AG04450 (cell line): ENCODE measurements at regions of chr10 and their contacts with region 1.

Region 1: GRCh38 chr10:101042667-101043355 is 11.8 kb downstream of the SFXN3 start:
- DNase-seq: peak; percentile 89
- H3K4me3 ChIP-seq: peak overlapping the region; percentile 58
- H3K27ac ChIP-seq: peak overlapping the region; percentile 84
- H3K27me3 ChIP-seq: no peaks in the 10 kb centered on the region
- CTCF ChIP-seq: no peak

Region 2: GRCh38 chr10:100803492-100803891 is 239.3 kb before region 1 on chr10:
- CTCF ChIA-PET with region 1: no interaction called
- POLR2A ChIA-PET with region 1: no interaction called
- DNase-seq: no peak
- H3K4me3 ChIP-seq: no peak overlapping the region
- H3K27ac ChIP-seq: no peak overlapping the region
- H3K27me3 ChIP-seq: peaks cover 49% of the 10 kb centered on the region
- CTCF ChIP-seq: no peak

Region 3: DNA sequence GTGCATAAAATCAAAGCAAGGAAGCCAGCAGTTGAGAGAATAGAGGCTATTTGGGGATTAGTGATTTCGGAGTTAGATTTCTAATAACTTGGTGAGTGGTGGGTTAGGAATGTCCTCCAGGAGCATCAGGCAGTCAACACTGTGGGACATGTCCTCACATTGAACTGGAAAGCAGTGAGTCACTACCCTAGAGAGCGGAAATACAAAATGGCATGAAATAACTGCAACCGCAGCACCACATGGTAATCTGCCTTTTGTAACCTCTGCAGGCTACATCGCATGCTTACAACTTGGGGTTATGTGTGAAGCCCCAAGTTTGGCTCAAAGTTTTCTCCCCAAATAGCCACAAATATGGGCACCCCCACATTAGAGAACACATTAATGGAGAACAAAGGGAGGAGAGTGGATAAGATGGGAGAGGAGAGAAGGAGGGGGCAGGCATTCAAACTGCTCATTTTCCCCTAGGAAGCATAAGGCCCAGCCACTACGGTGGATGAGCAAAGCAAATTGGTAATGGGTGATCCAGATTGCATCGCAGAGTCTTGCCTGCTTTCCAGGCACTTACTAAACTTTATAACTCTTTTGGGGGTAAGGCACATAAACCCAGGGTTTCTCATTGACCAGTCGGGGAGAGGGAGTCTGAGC is 152.0 kb before region 1 on chr10:
- CTCF ChIA-PET with region 1: no interaction called
- POLR2A ChIA-PET with region 1: no interaction called
- DNase-seq: peak; percentile 91
- H3K4me3 ChIP-seq: no peak overlapping the region
- H3K27ac ChIP-seq: peak overlapping the region; percentile 96
- H3K27me3 ChIP-seq: no peaks in the 10 kb centered on the region
- CTCF ChIP-seq: no peak

Region 4: GRCh38 chr10:100998991-100999741 is 43.6 kb before region 1 on chr10:
- CTCF ChIA-PET with region 1: interaction called, 22 read pairs
- POLR2A ChIA-PET with region 1: no interaction called
- DNase-seq: no peak
- H3K4me3 ChIP-seq: peak overlapping the region; percentile 90
- H3K27ac ChIP-seq: peak overlapping the region; percentile 95
- H3K27me3 ChIP-seq: no peaks in the 10 kb centered on the region
- CTCF ChIP-seq: peak; percentile 76

Region 5: GRCh38 chr10:101031128-101031795 is 11.5 kb before region 1 on chr10 and contains the starts of genes PDZD7 and SFXN3:
- CTCF ChIA-PET with region 1: interaction called, 26 read pairs
- POLR2A ChIA-PET with region 1: interaction called, 10 read pairs
- DNase-seq: peak; percentile 83
- H3K4me3 ChIP-seq: peak within 1 kb of the TSS; percentile 96
- H3K27ac ChIP-seq: peak within 1 kb of the TSS; percentile 99
- H3K27me3 ChIP-seq: no peaks in the 10 kb centered on the region
- CTCF ChIP-seq: no peak
- polyA plus RNA-seq, gene PDZD7: 0.27 and 0.60 TPM in 2 replicates
- polyA plus RNA-seq, gene SFXN3: 77.8 and 87.0 TPM in 2 replicates

Region 6: DNA sequence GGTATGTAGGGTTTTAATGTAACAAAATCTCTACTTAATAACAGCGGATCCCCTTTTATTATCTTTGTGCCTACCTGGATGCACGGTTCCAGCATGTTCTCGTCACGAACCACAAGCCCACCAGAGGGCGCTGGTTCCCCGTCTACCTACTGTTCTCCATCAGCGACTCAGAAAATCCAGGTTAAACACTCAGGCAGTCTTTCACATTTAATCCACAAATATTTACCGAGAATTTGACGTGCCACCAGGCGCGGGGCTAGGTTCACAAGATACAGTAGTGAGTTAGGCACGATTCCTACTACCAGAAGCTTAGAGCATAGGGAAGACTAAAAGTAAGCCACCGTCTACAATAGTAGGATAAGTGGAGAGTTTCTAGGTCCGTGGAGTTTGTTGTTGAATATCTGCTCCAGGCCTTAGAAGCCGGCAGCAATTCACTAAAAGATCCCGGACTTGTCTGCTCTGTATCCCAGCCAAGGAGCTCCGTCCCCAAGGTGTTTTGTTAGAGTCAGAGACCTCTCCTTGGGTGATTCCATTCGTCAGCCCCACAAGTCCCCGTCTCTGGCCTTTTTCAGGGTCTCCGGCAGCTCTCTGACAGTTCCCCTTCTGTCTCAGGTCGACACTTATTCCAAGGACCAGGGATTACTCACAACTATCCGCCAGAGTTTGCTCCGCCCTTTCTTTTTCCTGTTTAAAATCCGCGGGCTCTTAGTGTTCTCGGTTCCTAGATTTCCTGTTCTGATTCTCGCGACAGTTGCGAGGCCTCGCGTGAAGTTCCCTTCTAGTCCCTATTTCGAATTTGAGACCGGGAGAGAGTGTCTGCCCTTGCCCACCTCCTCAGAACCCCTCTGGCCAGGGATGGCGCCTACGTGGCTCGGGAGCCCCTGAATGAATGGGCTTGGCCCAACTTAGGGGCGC is 17.5 kb after region 1 on chr10:
- CTCF ChIA-PET with region 1: interaction called, 414 read pairs
- POLR2A ChIA-PET with region 1: interaction called, 30 read pairs
- DNase-seq: peak; percentile 85
- H3K4me3 ChIP-seq: peak overlapping the region; percentile 100
- H3K27ac ChIP-seq: peak overlapping the region; percentile 98
- H3K27me3 ChIP-seq: no peaks in the 10 kb centered on the region
- CTCF ChIP-seq: peak; percentile 88

Region 7: GRCh38 chr10:101195921-101196320 is 153.1 kb after region 1 on chr10:
- CTCF ChIA-PET with region 1: no interaction called
- POLR2A ChIA-PET with region 1: no interaction called
- DNase-seq: no peak
- H3K4me3 ChIP-seq: no peak overlapping the region
- H3K27ac ChIP-seq: no peak overlapping the region
- H3K27me3 ChIP-seq: peaks cover 38% of the 10 kb centered on the region
- CTCF ChIP-seq: no peak